HCT116 (cell line): ENCODE measurements at regions of chr3 and their contacts with region 1.

Region 1: GRCh38 chr3:87186618-87187159 is 40.4 kb upstream of the CHMP2B start:
- DNase-seq: no peak
- ATAC-seq: no peak
- H3K4me3 ChIP-seq: no peak overlapping the region
- H3K27ac ChIP-seq: no peak overlapping the region
- H3K4me1 ChIP-seq: no peaks in the 10 kb centered on the region
- H3K27me3 ChIP-seq: no peaks in the 10 kb centered on the region
- CTCF ChIP-seq: no peak
- POLR2A ChIP-seq: no peak
- RAD21 ChIP-seq: no peak

Region 2: DNA sequence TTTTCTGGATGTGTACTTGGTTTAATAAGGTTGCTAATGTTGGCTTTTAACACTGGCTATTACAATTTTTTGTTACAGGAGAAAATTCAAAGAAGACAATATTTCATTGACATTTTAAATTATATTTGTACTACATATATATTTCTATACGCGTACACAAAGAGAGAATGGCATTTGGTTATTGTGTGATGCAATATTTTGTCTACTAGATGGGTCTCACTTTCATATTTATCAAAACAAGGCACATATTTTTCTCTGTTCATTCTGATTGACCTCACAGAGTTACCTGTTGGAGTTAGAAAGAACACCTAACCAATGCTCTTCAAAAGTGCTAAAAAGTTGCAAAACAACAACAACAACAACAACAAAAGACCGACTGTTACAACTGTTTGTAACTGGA is 145.5 kb before region 1 on chr3:
- CTCF ChIA-PET with region 1: no interaction called
- POLR2A ChIA-PET with region 1: no interaction called
- RAD21 ChIA-PET with region 1: no interaction called
- intact Hi-C with region 1: no loop called
- DNase-seq: no peak
- ATAC-seq: no peak
- H3K4me3 ChIP-seq: no peak overlapping the region
- H3K27ac ChIP-seq: no peak overlapping the region
- H3K4me1 ChIP-seq: no peaks in the 10 kb centered on the region
- H3K27me3 ChIP-seq: 0 out of 2 replicates have a peak, but pooled peaks cover 5% of the 10 kb centered on the region
- CTCF ChIP-seq: no peak
- POLR2A ChIP-seq: no peak
- RAD21 ChIP-seq: no peak

Region 3: DNA sequence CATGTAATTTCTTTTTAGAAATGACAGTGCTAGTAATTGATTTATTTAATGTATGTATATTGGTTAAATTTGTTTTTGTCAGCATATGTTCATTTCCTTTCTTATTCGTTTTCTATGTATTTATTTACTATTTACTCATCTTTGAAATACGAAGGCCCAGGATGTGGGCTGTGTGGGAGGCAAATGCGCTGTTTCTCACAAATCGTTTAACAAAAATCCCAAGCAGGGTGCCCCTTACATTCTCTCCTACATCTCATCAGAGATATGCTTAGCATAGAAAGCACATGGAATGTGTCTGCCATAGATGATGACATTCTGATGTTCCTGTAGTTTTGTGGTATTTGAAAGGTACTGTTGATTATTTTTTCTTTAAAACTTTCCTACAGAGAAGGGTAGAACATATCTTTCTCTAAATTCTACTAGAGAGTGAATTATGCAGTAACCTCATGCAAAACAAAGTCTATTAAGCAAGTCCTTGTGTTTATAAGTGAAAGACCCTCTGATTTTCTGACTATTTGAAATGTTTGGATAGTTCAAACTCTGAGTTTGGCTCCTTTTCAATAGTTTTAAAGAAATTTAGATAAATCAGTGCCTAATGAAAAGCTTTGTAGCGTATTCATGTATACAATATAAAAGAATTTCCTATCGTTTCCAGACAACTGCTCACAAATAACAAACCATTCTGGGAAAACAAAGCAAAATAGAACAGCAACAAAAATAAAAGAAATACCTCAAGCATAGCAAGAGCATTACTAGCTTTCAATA is 84.6 kb before region 1 on chr3:
- CTCF ChIA-PET with region 1: no interaction called
- POLR2A ChIA-PET with region 1: no interaction called
- RAD21 ChIA-PET with region 1: no interaction called
- intact Hi-C with region 1: loop called (anchors 10 kb)
- DNase-seq: no peak
- ATAC-seq: no peak
- H3K4me3 ChIP-seq: no peak overlapping the region
- H3K27ac ChIP-seq: no peak overlapping the region
- H3K4me1 ChIP-seq: no peaks in the 10 kb centered on the region
- H3K27me3 ChIP-seq: no peaks in the 10 kb centered on the region
- CTCF ChIP-seq: no peak
- POLR2A ChIP-seq: no peak
- RAD21 ChIP-seq: no peak

Region 4: GRCh38 chr3:87426918-87427317 is 240.2 kb after region 1 on chr3:
- CTCF ChIA-PET with region 1: no interaction called
- POLR2A ChIA-PET with region 1: no interaction called
- RAD21 ChIA-PET with region 1: no interaction called
- intact Hi-C with region 1: no loop called
- DNase-seq: no peak
- ATAC-seq: no peak
- H3K4me3 ChIP-seq: no peak overlapping the region
- H3K27ac ChIP-seq: no peak overlapping the region
- H3K4me1 ChIP-seq: no peaks in the 10 kb centered on the region
- H3K27me3 ChIP-seq: no peaks in the 10 kb centered on the region
- CTCF ChIP-seq: no peak
- POLR2A ChIP-seq: no peak
- RAD21 ChIP-seq: no peak